AG04449 (cell line): ENCODE measurements at regions of chr4 and their contacts with region 1.

Region 1: GRCh38 chr4:75724066-75724866 is at the start of gene USO1:
- DNase-seq: peak; percentile 93
- H3K4me3 ChIP-seq: peak within 1 kb of the TSS; percentile 99
- CTCF ChIP-seq: peak; percentile 73

Region 2: GRCh38 chr4:75653845-75654503 is 70.3 kb before region 1 on chr4:
- CTCF ChIA-PET with region 1: interaction called, 18 read pairs
- POLR2A ChIA-PET with region 1: interaction called, 3 read pairs
- DNase-seq: no peak
- H3K4me3 ChIP-seq: no peak overlapping the region
- CTCF ChIP-seq: peak; percentile 48

Region 3: DNA sequence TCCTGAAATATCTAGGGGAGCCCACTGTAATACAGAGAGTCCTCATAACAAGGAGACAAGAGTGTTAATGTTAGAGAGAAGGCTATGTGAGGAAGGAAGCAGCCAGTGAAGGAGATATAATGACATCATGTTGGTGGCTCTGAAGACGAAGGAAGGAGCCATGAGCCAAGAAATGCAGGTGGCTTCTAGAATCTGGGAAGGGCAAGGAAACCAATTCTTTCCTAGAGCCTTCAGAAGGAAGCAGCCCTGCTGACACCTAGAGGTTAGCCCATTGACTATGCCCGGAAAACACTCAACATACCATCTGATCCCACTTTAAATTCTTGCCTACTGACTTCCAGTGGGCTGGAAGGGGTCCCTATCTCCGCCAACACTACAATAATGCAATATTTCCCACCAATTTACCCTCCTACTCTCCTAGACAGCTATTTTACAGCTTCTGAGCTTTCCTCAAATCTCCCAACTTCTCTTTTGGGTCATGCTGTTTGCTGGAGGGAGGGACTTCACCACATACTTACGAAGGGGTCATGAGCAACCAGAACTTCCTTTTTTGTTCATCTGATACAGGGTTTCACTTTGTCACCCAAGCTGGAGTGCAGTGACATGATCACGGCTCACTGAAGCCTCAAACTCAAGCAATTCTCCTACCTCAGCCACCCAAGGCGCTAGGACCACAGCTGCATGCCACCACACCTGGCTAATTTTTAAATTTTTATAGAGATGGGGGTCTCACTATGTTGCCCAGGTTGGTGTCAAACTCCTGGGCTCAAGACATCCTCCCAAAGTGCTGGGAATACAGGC is 25.9 kb before region 1 on chr4:
- CTCF ChIA-PET with region 1: interaction called, 12 read pairs
- POLR2A ChIA-PET with region 1: no interaction called
- DNase-seq: no peak
- H3K4me3 ChIP-seq: no peak overlapping the region
- CTCF ChIP-seq: no peak

Region 4: DNA sequence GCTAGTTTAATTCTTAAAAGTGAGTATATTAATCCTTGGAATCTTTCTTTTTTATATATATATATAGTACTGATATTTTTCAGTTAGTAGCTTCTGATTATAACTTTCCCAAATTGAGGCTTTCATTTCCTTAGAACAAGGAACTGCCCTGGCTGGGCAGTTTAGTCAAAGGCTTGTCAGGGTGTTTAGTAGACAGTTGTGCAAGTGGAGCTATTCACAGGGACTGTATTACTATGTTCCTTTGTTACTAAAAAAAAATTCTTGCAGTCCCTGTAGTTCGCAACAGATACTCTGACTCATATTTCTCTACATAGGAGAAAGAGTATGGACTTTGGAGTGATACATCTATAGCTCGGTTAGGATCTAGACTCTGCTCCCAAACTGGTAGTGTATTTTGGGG is 20.9 kb after region 1 on chr4:
- CTCF ChIA-PET with region 1: interaction called, 20 read pairs
- POLR2A ChIA-PET with region 1: interaction called, 19 read pairs
- DNase-seq: no peak
- H3K4me3 ChIP-seq: no peak overlapping the region
- CTCF ChIP-seq: no peak

Region 5: GRCh38 chr4:75817901-75818300 is 93.6 kb after region 1 on chr4:
- CTCF ChIA-PET with region 1: no interaction called
- POLR2A ChIA-PET with region 1: no interaction called
- DNase-seq: no peak
- H3K4me3 ChIP-seq: no peak overlapping the region
- CTCF ChIP-seq: no peak

Region 6: DNA sequence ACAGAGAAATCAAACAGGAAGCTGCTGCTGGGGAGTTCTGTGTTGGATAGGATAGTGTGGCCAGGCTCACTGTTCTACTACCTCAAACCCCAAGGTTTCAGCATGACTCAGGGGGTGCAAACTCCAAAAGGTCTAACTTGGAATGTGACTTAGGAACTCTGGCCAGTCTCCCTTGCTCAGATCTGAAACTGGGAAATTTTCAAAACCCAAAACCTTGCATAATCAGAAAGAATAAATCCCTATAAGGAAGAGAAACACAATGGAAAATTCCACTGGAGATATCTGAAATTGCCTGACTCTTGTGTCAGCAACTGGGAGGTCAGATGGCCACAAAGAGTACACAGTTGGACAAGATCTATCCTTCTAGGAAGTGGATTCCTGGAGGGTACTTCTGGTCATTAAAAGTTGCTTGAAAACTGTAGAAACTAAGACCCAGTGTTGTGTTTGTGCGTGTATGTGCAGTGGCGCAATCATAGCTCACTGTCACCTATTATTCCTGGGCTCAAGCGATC is 119.9 kb after region 1 on chr4:
- CTCF ChIA-PET with region 1: interaction called, 15 read pairs
- POLR2A ChIA-PET with region 1: no interaction called
- DNase-seq: peak; percentile 93
- H3K4me3 ChIP-seq: no peak overlapping the region
- CTCF ChIP-seq: no peak

Region 7: DNA sequence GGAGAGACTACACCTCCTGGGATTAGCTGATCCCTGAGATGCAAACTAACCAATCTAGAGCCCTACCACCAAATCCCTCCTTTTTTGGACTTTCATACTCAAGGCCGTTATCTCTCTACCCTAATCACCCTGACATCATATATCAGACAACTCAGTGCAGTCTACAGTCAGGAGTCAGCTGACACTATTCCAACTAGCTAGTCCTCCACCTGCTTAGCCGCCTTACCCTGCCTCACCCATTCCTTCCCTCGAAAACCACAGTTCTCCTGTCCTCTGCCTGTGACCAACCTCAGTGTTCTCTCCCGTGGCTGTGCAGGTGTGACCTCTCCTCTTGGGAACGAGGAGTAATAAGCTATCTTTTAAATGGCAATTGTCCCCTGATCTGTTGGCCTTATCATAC is 179.8 kb after region 1 on chr4:
- CTCF ChIA-PET with region 1: no interaction called
- POLR2A ChIA-PET with region 1: no interaction called
- DNase-seq: no peak
- H3K4me3 ChIP-seq: no peak overlapping the region
- CTCF ChIP-seq: no peak

Region 8: DNA sequence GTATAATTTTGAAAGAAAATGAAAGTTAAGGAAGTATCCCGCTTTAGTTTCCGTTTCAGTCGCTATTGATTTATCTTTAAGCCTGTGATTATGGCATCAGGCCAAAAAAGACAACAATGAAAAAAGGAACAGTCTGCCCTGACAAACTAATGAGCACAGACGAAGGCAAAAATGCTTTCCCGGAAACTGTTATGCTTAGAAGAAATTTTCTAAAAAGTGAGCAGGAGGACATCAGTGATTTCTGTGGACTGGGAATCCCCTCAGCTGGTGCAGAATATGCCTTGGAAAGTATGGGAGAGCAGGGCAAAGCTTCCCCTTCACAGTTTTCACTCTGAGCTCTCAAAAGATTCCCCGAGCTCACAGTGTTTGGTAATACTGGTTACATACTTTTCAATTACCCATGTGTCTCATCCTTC is 304.1 kb after region 1 on chr4:
- CTCF ChIA-PET with region 1: no interaction called
- POLR2A ChIA-PET with region 1: no interaction called
- DNase-seq: no peak
- H3K4me3 ChIP-seq: no peak overlapping the region
- CTCF ChIP-seq: no peak